Esophagus squamous epithelium (tissue), 5 donors: ENCODE measurements at regions of chr11 and their contacts with region 1.

Region 1: GRCh38 chr11:46308631-46309419 is 31.4 kb downstream of the CREB3L1 start:
- DNase-seq: no peak
- H3K4me3 ChIP-seq: no peak overlapping the region
- H3K27ac ChIP-seq: no peak overlapping the region
- H3K4me1 ChIP-seq: peaks cover 0 to 12% (median 4%) of the 10 kb centered on the region in 3 donors
- H3K27me3 ChIP-seq: peaks cover 0 to 5% (median 0%) of the 10 kb centered on the region in 4 donors
- CTCF ChIP-seq: peak; percentile 58 to 93 (median 84)
- POLR2A ChIP-seq: no peak

Region 2: DNA sequence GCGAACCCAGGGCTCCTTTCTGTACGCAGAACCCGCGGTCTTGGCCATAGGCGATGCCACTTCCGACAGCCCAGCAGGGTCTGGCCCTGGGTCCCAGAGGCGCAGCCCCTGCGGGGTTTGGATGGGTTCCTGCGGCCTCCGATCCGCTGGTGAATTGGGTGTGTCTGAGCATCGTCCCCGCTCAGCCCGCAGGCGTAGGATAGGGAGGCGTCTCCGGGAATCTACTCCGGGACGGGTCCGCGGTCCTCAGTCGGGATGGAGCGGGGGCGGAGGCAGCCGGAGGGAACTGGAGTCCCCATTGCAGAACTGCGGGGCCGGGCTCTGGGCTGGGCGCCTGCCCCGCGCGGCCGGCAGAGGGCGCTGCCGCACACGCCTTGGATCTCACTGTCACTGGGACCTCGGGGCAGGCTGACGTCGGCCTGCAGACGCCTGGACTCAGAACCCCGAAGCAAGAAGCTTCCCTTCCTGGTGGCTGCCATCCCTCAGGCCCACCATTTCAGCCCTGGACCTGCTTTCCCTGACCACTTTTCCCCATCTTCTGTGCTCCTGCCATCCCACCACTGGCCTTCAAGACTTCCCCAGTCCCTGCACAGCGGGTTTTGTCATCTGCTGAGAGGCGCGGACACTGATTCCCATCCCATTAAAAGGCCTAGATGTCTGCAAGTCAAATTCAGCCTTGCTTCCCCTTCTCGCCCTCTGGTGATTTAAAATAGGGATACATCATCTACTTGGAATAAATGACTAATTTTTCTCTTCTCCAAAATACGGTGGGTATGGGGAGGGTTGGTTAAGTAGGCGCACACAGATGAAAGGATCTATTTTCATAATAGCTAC is 69.6 kb before region 1 on chr11:
- intact Hi-C with region 1: loop called (anchors 5 kb)
- DNase-seq: no peak
- H3K4me3 ChIP-seq: peak overlapping the region; percentile 10 to 75 (median 52)
- H3K27ac ChIP-seq: peak overlapping the region; percentile 26 to 92 (median 80)
- H3K4me1 ChIP-seq: peaks cover 22 to 47% (median 26%) of the 10 kb centered on the region in 3 donors
- H3K27me3 ChIP-seq: peaks cover 0 to 33% (median 0%) of the 10 kb centered on the region in 4 donors
- CTCF ChIP-seq: peak; percentile 96 to 99 (median 98)
- POLR2A ChIP-seq: no peak

Region 3: DNA sequence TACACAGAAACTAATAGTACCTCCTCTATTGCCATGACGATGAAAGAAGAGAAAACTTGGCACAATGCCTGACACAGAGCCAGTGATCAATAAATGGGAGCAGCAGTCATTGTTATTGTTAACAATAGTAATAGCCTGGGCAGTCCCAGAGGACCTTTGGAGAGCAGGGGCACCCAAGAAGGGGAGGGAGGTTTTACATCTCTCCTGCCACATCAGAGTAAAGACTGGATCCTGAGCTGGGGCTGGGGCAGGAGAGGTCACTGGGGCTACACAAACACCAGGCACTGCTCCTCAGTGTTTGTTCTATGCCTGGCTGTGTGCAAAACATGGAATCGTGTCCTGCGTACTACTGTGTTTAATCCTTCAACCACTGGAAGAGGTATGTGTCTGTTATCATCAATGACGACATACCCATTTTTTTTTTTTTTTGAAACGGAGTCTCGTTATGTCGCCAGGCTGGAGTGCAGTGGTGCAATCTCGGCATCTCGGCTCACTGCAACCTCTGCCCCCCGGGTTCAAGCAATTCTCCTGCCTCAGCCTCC is 56.4 kb before region 1 on chr11:
- intact Hi-C with region 1: loop called (anchors 5 kb)
- DNase-seq: no peak
- H3K4me3 ChIP-seq: no peak overlapping the region
- H3K27ac ChIP-seq: no peak overlapping the region
- H3K4me1 ChIP-seq: no peaks in the 10 kb centered on the region
- H3K27me3 ChIP-seq: no peaks in the 10 kb centered on the region
- CTCF ChIP-seq: no peak
- POLR2A ChIP-seq: no peak